Vagina (tissue), 2 donors: ENCODE measurements at regions of chr10 and their contacts with region 1.

Region 1: GRCh38 chr10:97498076-97498840 is at the start of gene MMS19:
- DNase-seq: peak; percentile 99
- H3K4me3 ChIP-seq: peak within 1 kb of the TSS; percentile 75 to 84
- H3K27ac ChIP-seq: peak within 1 kb of the TSS; percentile 94
- H3K4me1 ChIP-seq: peaks cover 52% of the 10 kb centered on the region
- H3K27me3 ChIP-seq: no peaks in the 10 kb centered on the region
- CTCF ChIP-seq: no peak
- POLR2A ChIP-seq: peak in 1 of 2 donors; percentile 81
- total RNA-seq, gene MMS19: 92.6 TPM

Region 2: DNA sequence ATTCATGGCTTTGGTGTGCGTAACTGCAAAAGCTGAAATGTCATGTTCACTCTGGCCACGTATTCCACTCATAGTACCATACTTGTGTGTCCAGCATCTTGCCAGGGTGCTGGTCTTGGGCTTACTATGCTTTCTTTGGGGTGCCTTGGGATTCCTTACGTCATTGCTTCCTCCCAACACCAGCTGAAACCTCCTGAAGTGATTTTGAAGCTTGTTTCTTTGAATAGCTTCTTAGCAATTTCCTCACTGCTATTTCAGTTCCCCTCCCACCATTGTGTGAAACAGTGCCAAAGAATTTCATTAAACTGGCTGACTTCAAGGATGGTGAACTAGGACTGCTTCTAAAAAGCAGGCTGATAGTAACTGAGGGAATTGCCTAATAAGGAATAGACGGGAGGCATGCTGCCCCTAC is 1705.4 kb before region 1 on chr10:
- intact Hi-C with region 1: no loop called
- DNase-seq: no peak
- H3K4me3 ChIP-seq: no peak overlapping the region
- H3K27ac ChIP-seq: peak overlapping the region; percentile 58
- H3K4me1 ChIP-seq: peaks cover 24% of the 10 kb centered on the region
- H3K27me3 ChIP-seq: no peaks in the 10 kb centered on the region
- CTCF ChIP-seq: no peak
- POLR2A ChIP-seq: no peak

Region 3: DNA sequence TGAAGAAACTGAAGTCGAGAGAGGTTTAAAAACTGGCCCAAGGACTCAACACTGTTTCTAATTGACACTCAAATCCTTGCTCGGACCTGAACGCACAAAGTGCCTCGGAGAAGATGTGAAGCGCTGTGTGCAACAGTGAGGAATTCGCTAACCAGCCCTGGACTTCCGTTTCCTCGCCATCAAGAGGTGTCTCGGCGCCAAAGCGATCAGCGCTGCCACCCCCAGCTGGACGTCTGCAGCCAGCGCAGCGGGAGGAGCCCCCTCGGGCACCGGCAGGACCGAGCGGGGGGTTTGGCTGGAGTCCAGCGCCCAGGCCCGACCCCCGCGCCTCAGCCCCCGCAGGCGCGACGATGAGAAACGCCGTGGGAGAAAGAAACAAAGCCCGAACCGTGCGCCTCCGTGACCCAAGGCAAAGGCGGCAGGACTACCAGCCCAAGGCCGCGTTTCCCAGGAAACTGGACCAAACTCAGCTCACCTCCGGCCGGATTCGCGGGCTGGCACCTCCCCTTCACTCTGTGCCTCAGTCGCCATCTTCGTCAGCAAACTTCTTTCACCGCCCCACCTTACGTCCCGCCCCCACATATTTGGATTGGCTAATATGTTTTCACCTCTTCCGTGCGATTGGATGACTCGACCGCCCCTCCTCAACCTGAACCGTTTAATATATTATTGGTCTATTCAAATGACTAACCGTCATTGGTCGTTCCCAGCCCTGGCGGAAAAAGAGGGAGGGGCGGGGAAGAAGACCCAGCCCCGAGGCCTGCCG is 206.0 kb before region 1 on chr10 and contains the start of gene ARHGAP19:
- intact Hi-C with region 1: no loop called
- DNase-seq: peak in 1 of 2 donors; percentile 98
- H3K4me3 ChIP-seq: peak within 1 kb of the TSS; percentile 73 to 97
- H3K27ac ChIP-seq: peak within 1 kb of the TSS; percentile 90
- H3K4me1 ChIP-seq: peaks cover 8% of the 10 kb centered on the region
- H3K27me3 ChIP-seq: no peaks in the 10 kb centered on the region
- CTCF ChIP-seq: no peak
- POLR2A ChIP-seq: peak; percentile 39 to 61
- total RNA-seq, gene ARHGAP19: 3.9 TPM

Region 4: DNA sequence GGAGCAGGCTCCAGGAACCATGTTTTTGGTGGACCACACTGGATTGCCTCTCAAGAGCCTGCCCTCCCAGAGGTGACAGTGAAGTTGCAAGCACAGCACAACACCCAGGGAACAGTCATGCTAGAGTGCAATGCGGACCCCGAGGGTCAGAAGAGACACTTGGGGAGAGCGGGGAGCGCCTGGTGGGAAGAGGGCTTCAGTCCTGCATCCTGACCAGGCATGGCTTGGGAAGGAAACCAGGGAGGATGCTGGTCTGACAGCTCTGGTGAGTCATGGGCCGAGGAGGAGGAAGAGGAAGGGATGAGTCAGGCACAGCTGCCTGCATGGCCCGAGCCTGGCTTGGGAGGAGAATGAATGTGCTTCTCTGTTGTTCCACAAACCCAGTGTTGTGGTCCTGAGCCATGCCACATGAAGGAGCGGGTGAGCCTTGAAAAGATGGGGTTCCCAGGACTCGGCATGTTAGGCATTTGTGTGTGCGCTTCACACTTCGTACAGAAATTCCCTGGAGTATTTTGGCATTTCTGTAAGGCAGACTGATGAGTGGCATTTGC is 44.8 kb after region 1 on chr10:
- intact Hi-C with region 1: loop called (anchors 5 kb)
- DNase-seq: peak in 1 of 2 donors; percentile 97
- H3K4me3 ChIP-seq: peak overlapping the region in 1 of 2 donors; percentile 23
- H3K27ac ChIP-seq: peak overlapping the region; percentile 93
- H3K4me1 ChIP-seq: peaks cover 61% of the 10 kb centered on the region
- H3K27me3 ChIP-seq: no peaks in the 10 kb centered on the region
- CTCF ChIP-seq: peak in 1 of 3 experiments; percentile 4
- POLR2A ChIP-seq: no peak